ENCODE measurements at regions of chr7 and their contacts with region 1.

Region 1: GRCh38 chr7:31443457-31443856 is 70.4 kb upstream of the ITPRID1 start:
- DNase-seq: no peak
- ATAC-seq: no peak
- H3K4me3 Mint-ChIP-seq: no peak overlapping the region
- H3K27ac Mint-ChIP-seq: no peak overlapping the region
- H3K4me1 Mint-ChIP-seq: no peaks in the 10 kb centered on the region
- H3K27me3 Mint-ChIP-seq: peaks cover 4% of the 10 kb centered on the region

Region 2: GRCh38 chr7:30963805-30964204 is 479.7 kb before region 1 on chr7 and contains the start of gene GHRHR:
- CTCF ChIA-PET with region 1: no interaction called
- POLR2A ChIA-PET with region 1: no interaction called
- intact Hi-C with region 1: no loop called
- DNase-seq: no peak
- ATAC-seq: no peak
- H3K4me3 Mint-ChIP-seq: no peak within 1 kb of the TSS
- H3K27ac Mint-ChIP-seq: no peak within 1 kb of the TSS
- H3K4me1 Mint-ChIP-seq: no peaks in the 10 kb centered on the region
- H3K27me3 Mint-ChIP-seq: peaks cover 10% of the 10 kb centered on the region
- total RNA-seq, gene GHRHR: not detected

Region 3: DNA sequence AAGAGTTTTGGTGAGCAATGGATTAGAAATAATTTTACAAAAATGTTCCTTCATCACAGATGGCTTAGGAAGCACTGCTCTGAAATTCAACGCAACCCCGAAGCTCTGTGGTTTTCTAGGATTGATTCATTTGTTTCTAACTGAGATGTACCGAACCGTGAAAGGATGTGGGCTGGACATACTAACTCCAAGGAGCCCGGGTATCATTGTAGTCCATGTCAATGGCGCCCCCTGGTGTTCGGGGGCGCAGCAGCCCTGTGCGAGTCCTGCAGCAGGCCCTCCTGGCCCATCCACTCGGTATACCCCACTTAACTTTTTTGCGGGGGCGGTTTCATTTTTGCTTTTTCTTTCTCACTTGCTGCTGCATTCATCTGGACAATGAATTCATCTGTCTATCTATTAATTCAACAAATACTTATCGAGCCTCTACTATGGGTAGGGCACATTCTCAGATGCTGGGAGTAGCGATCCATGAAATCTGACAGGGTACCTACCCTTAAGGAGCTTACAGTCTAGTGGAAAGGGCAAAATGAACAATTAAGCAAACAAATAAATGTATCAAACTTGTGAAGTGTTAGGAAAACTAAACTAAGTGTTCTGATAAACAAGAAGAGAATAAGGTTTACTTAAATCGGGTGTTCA is 45.2 kb after region 1 on chr7:
- CTCF ChIA-PET with region 1: interaction called, 5 read pairs
- POLR2A ChIA-PET with region 1: no interaction called
- intact Hi-C with region 1: loop called (anchors 1 to 5 kb)
- DNase-seq: peak; percentile 72
- ATAC-seq: peak; percentile 68
- H3K4me3 Mint-ChIP-seq: no peak overlapping the region
- H3K27ac Mint-ChIP-seq: no peak overlapping the region
- H3K4me1 Mint-ChIP-seq: no peaks in the 10 kb centered on the region
- H3K27me3 Mint-ChIP-seq: no peaks in the 10 kb centered on the region

Region 4: DNA sequence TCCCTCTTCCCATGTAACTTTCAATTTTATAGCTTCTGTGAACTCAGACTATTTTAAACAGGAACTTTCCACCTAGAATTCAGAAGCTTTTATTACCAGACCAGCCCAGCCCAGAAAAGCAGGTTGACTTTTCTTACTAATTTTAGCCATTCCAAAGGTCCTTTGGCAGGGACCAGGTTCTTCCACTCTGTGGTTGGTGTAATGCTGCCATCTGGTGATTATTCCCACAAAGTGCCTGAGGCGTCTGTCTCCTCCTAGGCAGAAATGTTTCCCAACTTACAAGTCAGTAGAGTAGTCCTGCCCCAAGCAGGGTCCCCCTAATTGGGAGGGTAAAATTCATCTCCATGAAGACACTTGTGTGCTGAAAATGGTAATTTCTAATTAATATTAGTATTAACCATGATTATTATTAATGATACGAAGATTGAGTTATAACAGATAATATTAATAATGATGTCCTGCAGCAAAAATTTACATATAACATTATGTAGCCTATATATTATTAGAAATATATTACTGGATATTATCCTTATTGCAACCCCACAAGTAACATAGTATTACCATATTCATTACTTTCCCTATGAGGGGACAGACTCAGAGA is 190.5 kb after region 1 on chr7:
- CTCF ChIA-PET with region 1: no interaction called
- POLR2A ChIA-PET with region 1: no interaction called
- intact Hi-C with region 1: loop called (anchors 2 to 5 kb)
- DNase-seq: peak; percentile 12
- ATAC-seq: no peak
- H3K4me3 Mint-ChIP-seq: no peak overlapping the region
- H3K27ac Mint-ChIP-seq: no peak overlapping the region
- H3K4me1 Mint-ChIP-seq: no peaks in the 10 kb centered on the region
- H3K27me3 Mint-ChIP-seq: no peaks in the 10 kb centered on the region

Region 5: DNA sequence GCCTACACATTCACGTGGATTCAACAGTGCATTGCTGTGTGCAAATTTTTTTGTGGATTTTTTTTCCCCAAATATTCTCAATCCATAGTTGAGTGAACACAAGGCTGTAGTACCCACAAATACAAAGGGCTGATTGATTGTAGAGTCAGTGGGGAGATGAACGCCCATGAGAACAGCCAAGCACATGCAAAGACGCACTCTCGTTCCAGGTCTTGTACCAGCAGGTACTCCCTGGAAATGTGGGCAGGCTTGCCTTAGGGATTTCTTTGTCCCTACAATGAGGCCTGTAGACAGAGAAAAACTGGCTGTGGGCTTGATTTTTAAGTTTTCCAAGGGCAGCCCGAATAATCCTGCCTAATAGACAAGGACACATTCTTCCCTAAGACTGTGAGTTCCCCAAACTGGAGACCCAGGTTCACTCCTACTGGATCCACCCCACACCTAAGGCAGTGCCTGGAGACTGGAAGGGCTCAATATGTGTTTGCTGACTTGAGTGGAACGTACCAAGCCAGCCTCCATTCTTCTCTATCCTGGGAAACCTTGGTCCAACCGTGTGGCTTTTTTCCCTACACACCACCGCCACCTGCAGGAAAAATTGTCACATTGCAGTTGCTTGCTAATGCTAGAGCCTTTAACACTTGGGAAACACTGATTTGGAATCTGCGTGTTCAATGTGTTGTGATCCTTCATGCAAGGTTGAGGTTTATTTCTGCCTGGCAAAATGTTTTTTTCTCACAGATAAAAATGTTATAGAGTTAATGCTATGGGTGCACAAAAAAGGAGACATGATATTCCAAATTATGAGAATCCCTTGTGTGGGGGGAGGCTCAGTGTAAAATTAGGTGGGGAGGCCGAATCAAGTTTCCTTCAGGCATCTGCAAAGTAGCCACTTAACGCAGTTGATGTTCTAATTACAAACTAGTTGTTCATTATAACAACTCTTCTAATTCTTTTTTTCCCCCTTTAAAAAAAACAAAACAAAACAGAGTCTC is 292.8 kb after region 1 on chr7:
- CTCF ChIA-PET with region 1: interaction called, 3 read pairs
- POLR2A ChIA-PET with region 1: no interaction called
- intact Hi-C with region 1: loop called (anchors 1 kb)
- DNase-seq: peak; percentile 27
- ATAC-seq: no peak
- H3K4me3 Mint-ChIP-seq: no peak overlapping the region
- H3K27ac Mint-ChIP-seq: no peak overlapping the region
- H3K4me1 Mint-ChIP-seq: no peaks in the 10 kb centered on the region
- H3K27me3 Mint-ChIP-seq: peaks cover 3% of the 10 kb centered on the region